MCF 10A (cell line): ENCODE measurements at regions of chr1 and their contacts with region 1.

Region 1: DNA sequence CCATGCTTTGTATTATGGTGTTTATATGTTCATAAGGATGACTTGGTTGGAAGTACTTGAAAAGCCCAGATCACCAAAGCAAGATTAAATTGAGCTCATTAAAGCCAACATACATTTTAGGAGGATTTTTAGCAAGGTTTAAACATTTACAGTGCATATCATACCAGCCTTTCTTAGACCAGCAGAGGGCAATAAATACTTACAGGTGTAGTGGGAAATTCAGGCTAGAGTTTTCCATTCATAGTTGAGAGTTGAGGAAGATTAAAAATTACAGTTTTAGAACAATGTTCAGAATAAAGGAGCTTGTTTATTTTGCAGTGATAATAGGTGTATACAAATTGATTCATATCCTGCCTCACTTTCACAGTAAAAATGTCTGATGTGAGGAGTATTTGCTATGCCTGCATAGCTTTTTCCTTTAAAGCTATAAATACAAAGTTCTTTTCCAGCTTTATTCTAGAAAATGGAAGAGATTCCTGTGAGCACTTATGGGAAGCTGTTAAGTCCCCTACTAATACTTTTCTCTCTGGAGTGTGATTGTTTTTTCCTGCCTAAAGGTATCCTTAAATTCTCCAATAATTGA is 35.3 kb downstream of the DTL start:
- DNase-seq: peak; percentile 72
- H3K4me3 Mint-ChIP-seq: no peak overlapping the region
- H3K27ac Mint-ChIP-seq: peak overlapping the region; percentile 13
- H3K4me1 Mint-ChIP-seq: no peaks in the 10 kb centered on the region
- H3K27me3 Mint-ChIP-seq: no peaks in the 10 kb centered on the region
- CTCF ChIP-seq: peak; percentile 97

Region 2: DNA sequence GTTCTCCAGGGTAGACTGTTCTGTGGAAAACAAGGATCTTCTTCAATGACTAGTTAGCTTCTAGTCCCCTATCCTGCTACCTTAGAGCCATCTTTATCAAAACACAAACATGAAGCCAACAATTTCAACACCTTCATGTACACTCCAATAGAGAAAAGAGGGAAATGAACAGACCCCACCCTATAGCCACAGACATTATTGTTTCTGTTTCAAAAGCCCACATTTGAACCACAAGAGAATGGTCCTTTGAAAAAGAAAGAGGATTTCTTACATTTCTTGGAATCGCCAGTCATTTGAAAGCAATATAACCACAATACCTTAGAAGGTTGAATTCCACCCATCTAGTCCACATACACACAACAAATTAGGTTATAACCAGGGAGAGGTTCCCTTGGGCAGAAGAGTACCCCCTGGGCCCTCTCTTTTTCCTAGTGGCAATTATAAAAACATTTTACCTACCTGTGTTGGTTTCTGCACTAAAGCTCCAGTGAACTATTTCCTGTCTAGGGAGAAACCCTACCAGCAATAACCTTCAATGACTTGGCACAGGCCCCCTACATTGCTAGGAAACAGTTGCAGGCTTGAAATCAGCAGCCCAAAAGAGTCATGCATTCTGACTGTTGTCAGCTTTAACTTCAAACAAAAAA is 237.5 kb before region 1 on chr1:
- CTCF ChIA-PET with region 1: no interaction called
- POLR2A ChIA-PET with region 1: no interaction called
- intact Hi-C with region 1: no loop called
- DNase-seq: no peak
- H3K4me3 Mint-ChIP-seq: no peak overlapping the region
- H3K27ac Mint-ChIP-seq: no peak overlapping the region
- H3K4me1 Mint-ChIP-seq: peaks cover 20% of the 10 kb centered on the region
- H3K27me3 Mint-ChIP-seq: no peaks in the 10 kb centered on the region
- CTCF ChIP-seq: no peak

Region 3: DNA sequence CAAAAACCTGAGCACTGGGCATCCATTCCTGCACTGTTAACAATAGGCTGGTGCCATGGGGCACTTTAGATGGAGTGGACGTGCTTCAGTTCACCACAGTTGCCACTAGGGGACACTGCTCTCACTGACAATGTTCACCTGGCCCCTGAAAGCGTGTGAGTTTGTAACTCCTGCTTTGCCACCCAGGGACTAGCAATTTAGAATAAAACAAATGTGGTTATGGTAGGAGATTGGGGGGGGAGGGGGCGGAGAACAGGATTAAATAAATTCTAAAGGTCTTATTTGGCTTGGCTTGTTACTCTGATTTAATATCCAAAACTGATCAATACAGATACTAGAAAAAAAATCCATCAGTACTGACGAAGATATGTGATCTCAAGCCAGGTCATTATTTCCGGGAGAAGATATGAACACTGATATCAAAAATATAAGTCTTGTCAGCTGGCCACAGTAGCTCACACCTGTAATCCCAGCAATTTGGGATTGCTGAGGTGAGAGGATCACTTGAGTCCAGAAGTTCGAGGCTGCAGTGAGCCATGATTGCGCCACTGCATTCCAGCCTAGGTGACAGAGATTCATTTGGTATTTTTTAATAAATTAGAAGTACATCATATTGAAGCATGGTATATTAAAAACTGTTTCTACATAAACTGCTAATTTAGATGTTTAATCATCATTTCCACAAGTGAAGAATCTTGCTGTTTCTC is 58.6 kb before region 1 on chr1:
- CTCF ChIA-PET with region 1: interaction called, 18 read pairs
- POLR2A ChIA-PET with region 1: no interaction called
- intact Hi-C with region 1: no loop called
- DNase-seq: peak; percentile 95
- H3K4me3 Mint-ChIP-seq: no peak overlapping the region
- H3K27ac Mint-ChIP-seq: no peak overlapping the region
- H3K4me1 Mint-ChIP-seq: no peaks in the 10 kb centered on the region
- H3K27me3 Mint-ChIP-seq: no peaks in the 10 kb centered on the region
- CTCF ChIP-seq: peak; percentile 100

Region 4: DNA sequence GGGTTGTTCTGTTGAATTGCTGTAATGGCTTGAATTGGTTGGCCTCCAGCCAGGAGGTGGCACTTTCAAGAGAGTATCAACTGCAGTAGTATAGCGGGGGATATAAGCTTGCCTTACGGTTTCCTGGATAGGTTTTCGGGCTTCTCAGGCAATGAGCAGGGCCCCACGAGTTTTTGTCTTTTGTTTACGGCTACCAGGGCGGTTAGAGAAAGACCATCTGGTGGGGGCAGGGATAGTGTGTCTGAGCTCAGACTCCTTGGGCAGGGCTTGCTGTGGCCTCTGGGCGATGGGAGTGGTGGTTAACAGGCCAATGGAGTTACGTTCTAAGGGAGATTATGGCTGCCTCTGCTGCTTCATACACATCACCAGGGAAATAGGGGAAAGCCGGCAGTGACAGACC is 27.5 kb after region 1 on chr1:
- CTCF ChIA-PET with region 1: interaction called, 37 read pairs
- POLR2A ChIA-PET with region 1: no interaction called
- intact Hi-C with region 1: no loop called
- DNase-seq: no peak
- H3K4me3 Mint-ChIP-seq: no peak overlapping the region
- H3K27ac Mint-ChIP-seq: peak overlapping the region; percentile 0
- H3K4me1 Mint-ChIP-seq: no peaks in the 10 kb centered on the region
- H3K27me3 Mint-ChIP-seq: no peaks in the 10 kb centered on the region
- CTCF ChIP-seq: no peak

Region 5: DNA sequence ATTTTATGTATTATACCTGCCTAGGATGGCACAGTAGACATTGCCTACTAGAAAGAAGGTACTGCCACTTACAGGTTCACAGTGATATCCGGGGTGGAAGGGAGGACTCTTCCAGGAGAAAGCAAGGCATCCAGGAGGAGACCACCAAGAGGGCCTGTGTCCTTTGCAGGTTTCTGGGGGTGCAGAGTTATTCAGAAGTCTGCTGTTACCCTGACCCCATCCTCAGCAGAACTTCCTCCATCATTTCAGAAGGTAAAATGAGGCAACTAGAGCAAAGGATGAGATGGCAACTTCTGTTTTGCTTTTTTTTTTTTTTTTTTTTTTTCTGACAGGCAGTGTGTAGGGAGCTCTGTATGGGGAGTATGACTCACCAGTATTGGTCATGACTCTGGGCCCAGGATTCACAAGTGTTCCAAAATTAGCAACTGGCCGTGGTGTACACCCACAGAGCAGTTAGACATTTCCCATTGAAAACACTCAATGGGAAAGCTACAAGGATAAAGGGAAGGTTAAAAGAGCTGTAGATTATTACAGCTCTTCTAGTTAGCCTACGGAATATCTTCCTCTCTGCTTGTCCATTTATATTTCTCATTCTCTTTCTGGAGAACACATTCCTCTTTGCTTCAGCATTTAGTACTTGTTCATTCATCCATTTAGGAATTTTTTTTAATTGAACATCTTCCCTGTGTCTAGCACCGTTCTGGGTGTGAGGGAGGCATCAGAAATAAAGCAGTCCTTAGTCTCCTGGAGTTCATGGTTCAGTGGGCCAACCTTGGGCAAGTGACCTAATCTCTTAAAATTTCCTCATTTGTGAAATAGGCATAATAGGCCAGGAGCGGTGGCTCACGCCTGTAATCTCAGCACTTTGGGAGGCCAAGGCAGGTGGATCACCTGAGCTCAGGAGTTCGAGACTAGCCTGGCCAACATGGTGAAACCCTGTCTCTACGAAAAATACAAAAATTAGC is 163.9 kb after region 1 on chr1:
- CTCF ChIA-PET with region 1: interaction called, 40 read pairs
- POLR2A ChIA-PET with region 1: interaction called, 5 read pairs
- intact Hi-C with region 1: no loop called
- DNase-seq: peak; percentile 99
- H3K4me3 Mint-ChIP-seq: no peak overlapping the region
- H3K27ac Mint-ChIP-seq: peak overlapping the region; percentile 44
- H3K4me1 Mint-ChIP-seq: peaks cover 19% of the 10 kb centered on the region
- H3K27me3 Mint-ChIP-seq: no peaks in the 10 kb centered on the region
- CTCF ChIP-seq: no peak

Region 6: DNA sequence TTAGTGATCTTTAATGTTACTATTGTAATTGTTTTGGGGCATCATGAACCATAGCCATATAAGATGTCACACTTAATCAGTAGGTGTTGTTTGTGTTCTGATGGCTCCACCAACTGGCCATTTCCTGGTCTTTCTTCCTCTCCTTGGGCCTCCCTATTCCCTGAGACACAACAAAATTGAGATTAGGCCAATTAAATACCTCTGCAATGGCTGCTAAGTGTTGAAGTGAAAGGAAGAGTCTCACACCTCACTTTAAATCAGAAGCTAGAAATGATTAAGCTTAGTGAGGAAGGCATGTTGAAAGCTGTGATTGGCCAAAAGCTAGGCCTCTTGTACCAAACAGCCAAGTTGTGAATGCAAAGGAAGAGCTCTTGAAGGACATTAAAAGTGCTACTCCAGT is 245.1 kb after region 1 on chr1:
- CTCF ChIA-PET with region 1: interaction called, 177 read pairs
- POLR2A ChIA-PET with region 1: interaction called, 6 read pairs
- intact Hi-C with region 1: loop called (anchors 1 kb)
- DNase-seq: peak; percentile 72
- H3K4me3 Mint-ChIP-seq: no peak overlapping the region
- H3K27ac Mint-ChIP-seq: peak overlapping the region; percentile 60
- H3K4me1 Mint-ChIP-seq: peaks cover 14% of the 10 kb centered on the region
- H3K27me3 Mint-ChIP-seq: no peaks in the 10 kb centered on the region
- CTCF ChIP-seq: peak; percentile 48

Region 7: GRCh38 chr1:212381397-212382035 is 310.7 kb after region 1 on chr1:
- CTCF ChIA-PET with region 1: interaction called, 43 read pairs
- POLR2A ChIA-PET with region 1: interaction called, 3 read pairs
- intact Hi-C with region 1: no loop called
- DNase-seq: no peak
- H3K4me3 Mint-ChIP-seq: no peak overlapping the region
- H3K27ac Mint-ChIP-seq: no peak overlapping the region
- H3K4me1 Mint-ChIP-seq: no peaks in the 10 kb centered on the region
- H3K27me3 Mint-ChIP-seq: no peaks in the 10 kb centered on the region
- CTCF ChIP-seq: no peak

Region 8: DNA sequence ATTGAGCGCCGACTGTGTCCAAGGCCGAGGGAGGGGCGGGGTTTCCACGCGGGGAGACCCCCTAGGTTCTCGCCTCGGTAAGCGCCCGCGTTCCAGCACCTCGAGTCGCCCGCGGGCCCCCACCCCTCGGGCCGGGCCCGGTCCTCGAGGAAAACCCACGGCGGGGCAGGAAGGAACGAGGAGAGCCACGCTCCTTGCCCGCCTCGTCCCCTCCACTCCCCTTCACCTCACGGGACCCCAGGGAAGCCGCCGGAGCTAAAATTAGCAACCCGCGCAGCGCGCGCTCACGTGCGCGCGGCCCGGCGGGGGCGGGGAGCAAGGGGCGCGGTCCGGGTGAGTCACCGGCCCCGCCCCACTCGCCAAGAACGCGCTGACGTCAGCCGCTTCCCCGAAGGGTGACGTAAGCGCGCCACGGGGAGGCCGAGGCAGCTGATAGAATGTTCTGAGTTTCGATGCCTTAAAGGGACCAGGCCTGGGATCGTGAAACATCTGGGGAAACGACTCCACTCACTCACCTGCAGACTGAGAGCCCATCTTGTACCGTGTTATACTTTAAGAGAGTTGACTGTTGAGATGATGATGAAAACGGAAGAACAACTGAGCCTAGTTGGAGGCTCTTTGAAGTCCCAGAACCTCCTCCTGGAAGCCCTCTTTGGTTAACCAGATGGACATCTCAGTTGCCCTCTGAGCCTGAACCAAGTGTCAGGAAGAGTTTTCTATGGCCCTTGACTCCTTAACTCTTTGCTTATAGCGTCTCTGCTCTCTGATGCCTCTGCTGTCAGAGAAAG is 488.1 kb after region 1 on chr1:
- CTCF ChIA-PET with region 1: no interaction called
- POLR2A ChIA-PET with region 1: no interaction called
- intact Hi-C with region 1: no loop called
- DNase-seq: peak; percentile 98
- H3K4me3 Mint-ChIP-seq: peak overlapping the region; percentile 70
- H3K27ac Mint-ChIP-seq: peak overlapping the region; percentile 99
- H3K4me1 Mint-ChIP-seq: peaks cover 16% of the 10 kb centered on the region
- H3K27me3 Mint-ChIP-seq: no peaks in the 10 kb centered on the region
- CTCF ChIP-seq: no peak